Left ventricle myocardium superior (tissue), 1 donor: ENCODE measurements at regions of chr10 and their contacts with region 1.

Region 1: GRCh38 chr10:23314835-23315239 is 29.8 kb downstream of the C10orf67 start:
- DNase-seq: no peak
- ATAC-seq: peak; percentile 58

Region 2: GRCh38 chr10:23530079-23530478 is 215.2 kb after region 1 on chr10:
- intact Hi-C with region 1: loop called (anchors 2 kb)
- DNase-seq: no peak
- ATAC-seq: no peak